ENCODE measurements at regions of chr13 and their contacts with region 1.

Region 1: DNA sequence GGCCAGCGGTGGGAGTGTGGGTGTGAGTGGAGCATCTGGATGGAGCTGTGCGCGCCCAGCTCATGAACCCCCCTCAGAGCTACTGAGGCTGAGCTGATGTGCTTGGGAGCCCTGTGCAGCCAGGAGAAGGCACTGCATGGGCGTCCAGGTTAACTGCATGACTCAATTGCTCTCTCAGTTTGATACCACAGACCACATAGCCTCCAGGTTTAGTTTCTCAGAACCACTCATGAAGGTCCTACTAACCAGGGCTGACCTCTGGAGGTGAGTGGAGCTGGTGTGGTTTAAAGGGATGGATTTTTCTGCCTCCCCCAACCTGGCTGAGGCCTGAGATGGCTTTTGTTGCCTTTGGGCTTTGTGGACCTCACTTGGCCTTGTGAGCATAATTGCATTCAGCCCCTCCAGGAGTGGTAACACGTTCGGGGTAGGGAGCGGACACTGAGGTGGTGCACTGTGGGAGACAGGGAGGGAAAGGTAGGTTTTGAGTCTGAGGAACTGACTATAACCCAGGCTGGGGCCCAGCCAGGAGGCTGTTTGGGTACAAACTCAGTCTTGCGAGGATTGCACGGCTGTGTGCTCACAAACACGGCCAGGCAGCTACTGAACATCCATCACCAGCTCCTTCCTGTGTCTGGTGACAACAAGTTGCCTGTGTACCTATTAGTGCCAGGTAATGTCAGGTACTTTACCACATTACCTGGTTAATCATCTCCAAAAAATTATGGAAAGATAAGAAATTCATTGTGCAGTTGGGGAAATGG is 97.5 kb downstream of the RGCC start:
- DNase-seq: peak; percentile 41
- H3K4me3 Mint-ChIP-seq: no peak overlapping the region
- H3K27ac Mint-ChIP-seq: no peak overlapping the region
- H3K4me1 Mint-ChIP-seq: peaks cover 6% of the 10 kb centered on the region
- H3K27me3 Mint-ChIP-seq: no peaks in the 10 kb centered on the region

Region 2: DNA sequence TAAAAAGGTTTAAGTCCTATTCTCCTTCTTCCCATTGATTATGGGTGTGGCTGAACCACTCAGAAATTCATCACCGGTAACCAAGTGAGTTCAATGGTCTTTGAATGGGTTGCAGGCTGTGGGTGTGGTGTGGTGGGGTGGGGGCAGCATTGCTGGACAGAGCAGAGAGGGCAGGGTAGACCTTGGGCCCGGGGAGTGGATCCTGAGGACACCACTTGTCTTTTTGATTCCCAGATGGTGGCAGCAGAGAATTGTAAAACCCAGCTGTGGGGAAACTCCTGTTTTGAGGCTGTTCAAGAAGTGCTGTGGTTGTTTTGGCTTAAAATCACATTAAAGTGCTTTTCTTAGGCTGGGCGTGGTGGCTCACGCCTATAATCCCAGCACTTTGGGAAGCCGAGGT is 143.3 kb before region 1 on chr13:
- CTCF ChIA-PET with region 1: no interaction called
- intact Hi-C with region 1: loop called (anchors 5 kb)
- DNase-seq: peak; percentile 56
- H3K4me3 Mint-ChIP-seq: no peak overlapping the region
- H3K27ac Mint-ChIP-seq: no peak overlapping the region
- H3K4me1 Mint-ChIP-seq: peaks cover 2% of the 10 kb centered on the region
- H3K27me3 Mint-ChIP-seq: no peaks in the 10 kb centered on the region